ENCODE measurements at regions of chr7 and their contacts with region 1.

Region 1: GRCh38 chr7:72493850-72494661 is 81.9 kb upstream of the CALN1 start:
- DNase-seq: peak; percentile 65
- H3K4me3 ChIP-seq: peak overlapping the region in 1 of 2 experiments; percentile 49; a peak in 1 of 4 replicates
- H3K27ac ChIP-seq: no peak overlapping the region
- H3K4me1 ChIP-seq: peaks cover 0 to 6% of the 10 kb centered on the region in 2 experiments; a peak in 1 of 4 replicates
- H3K27me3 ChIP-seq: no peaks in the 10 kb centered on the region
- CTCF ChIP-seq: peak; percentile 92
- EP300 ChIP-seq: no peak
- RAD21 ChIP-seq: peak; percentile 67

Region 2: DNA sequence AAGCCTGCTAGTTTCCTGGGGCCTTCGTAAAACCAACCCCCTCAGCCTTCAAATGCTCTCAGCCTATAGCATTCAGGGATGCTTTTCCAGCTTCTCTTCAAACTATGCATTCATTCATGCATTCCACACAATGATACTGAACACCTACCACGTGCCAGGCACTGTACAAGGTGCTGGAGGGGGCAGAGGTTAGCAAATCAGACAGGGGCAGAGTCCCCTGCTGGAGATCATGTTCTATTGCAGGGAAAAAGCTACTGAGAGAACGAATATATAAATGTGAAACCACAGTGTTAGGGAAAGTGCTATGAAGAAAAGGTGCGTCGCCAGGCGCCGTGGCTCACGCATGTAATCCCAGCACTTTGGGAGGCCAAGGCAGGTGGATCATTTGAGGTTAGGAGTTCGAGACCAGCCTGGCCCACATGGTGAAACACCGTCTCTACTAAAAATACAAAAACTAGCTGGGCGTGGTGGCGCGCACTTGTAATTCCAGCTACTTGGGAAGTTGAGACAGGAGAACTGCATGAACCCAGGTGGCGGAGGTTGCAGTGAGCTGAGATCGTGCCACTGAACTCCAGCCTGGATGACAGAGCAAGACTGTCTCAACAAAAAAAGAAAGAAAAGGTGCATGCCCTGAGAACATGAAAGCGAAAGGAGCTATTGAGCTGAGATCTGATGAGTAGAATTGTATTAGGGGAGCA is 17.3 kb before region 1 on chr7:
- CTCF ChIA-PET with region 1: interaction called, 21 read pairs
- POLR2A ChIA-PET with region 1: no interaction called
- DNase-seq: no peak
- H3K4me3 ChIP-seq: no peak overlapping the region
- H3K27ac ChIP-seq: no peak overlapping the region
- H3K4me1 ChIP-seq: no peaks in the 10 kb centered on the region
- H3K27me3 ChIP-seq: no peaks in the 10 kb centered on the region; the same call in 1 of the 2 replicates
- CTCF ChIP-seq: no peak; the same call in 1 of the 2 replicates
- EP300 ChIP-seq: no peak
- RAD21 ChIP-seq: no peak

Region 3: GRCh38 chr7:72481934-72482333 is 12.1 kb before region 1 on chr7:
- CTCF ChIA-PET with region 1: interaction called, 21 read pairs
- POLR2A ChIA-PET with region 1: no interaction called
- DNase-seq: no peak
- H3K4me3 ChIP-seq: no peak overlapping the region
- H3K27ac ChIP-seq: no peak overlapping the region
- H3K4me1 ChIP-seq: no peaks in the 10 kb centered on the region
- H3K27me3 ChIP-seq: no peaks in the 10 kb centered on the region
- CTCF ChIP-seq: no peak
- EP300 ChIP-seq: no peak
- RAD21 ChIP-seq: no peak

Region 4: GRCh38 chr7:72504061-72504706 is 10.1 kb after region 1 on chr7:
- CTCF ChIA-PET with region 1: interaction called, 42 read pairs
- POLR2A ChIA-PET with region 1: no interaction called
- DNase-seq: no peak
- H3K4me3 ChIP-seq: no peak overlapping the region
- H3K27ac ChIP-seq: no peak overlapping the region
- H3K4me1 ChIP-seq: no peaks in the 10 kb centered on the region
- H3K27me3 ChIP-seq: peaks cover 13% of the 10 kb centered on the region; the same call in 1 of the 2 replicates
- CTCF ChIP-seq: no peak
- EP300 ChIP-seq: no peak
- RAD21 ChIP-seq: no peak

Region 5: GRCh38 chr7:72524037-72524436 is 30.0 kb after region 1 on chr7:
- CTCF ChIA-PET with region 1: interaction called, 15 read pairs
- POLR2A ChIA-PET with region 1: no interaction called
- DNase-seq: no peak
- H3K4me3 ChIP-seq: no peak overlapping the region
- H3K27ac ChIP-seq: no peak overlapping the region
- H3K4me1 ChIP-seq: no peaks in the 10 kb centered on the region
- H3K27me3 ChIP-seq: no peaks in the 10 kb centered on the region
- CTCF ChIP-seq: no peak
- EP300 ChIP-seq: no peak
- RAD21 ChIP-seq: no peak